ENCODE measurements at regions of chr5 and their contacts with region 1.

Region 1: GRCh38 chr5:75214928-75215327 is 21.8 kb downstream of the ANKRD31 start:
- DNase-seq: peak; percentile 36
- H3K4me3 ChIP-seq: no peak overlapping the region
- H3K27ac ChIP-seq: no peak overlapping the region
- H3K4me1 ChIP-seq: no peaks in the 10 kb centered on the region
- H3K27me3 ChIP-seq: no peaks in the 10 kb centered on the region
- CTCF ChIP-seq: no peak

Region 2: DNA sequence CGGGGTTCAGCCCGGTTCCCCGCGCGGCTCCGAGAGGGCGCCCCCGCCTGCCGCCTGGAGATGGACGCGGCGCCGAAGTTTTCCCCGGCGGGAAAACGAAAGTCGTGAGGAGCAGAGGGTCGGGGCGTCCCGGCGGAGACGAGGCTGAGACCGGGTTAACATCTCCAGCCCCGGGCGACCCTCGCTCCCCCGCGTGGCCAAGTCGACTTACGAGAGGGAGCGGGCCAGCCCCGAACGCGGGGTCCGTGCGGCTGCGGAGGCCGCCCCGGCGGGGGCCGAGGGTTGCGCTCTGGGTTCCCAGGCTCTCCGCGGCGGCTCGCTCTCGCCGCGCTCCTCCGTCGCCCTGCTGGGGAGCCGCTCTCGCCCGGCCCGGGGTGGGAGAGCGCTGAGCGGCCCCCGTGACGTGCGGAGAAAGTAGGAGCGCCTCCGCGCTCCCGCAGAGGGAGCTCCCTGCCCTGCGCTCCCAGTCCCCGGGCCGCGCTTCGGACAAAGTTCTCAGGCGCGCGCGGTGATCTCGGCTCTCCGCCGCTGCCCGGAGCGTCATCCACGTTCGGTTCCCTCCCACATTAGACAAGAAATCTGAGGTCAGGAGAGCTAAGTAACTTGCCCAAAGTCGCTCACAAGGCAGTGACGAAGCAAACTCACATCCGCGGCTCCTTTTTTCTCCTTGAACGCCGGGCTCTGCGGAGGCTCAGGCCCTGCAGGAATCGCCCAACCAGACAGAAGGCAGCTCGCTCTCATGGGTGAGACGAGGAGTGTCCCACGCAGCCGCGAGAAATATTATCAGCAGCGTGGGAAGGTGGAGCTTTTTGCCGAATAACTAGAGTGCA is 161.4 kb before region 1 on chr5:
- intact Hi-C with region 1: loop called (anchors 5 kb)
- DNase-seq: peak; percentile 62
- H3K4me3 ChIP-seq: peak overlapping the region; percentile 82
- H3K27ac ChIP-seq: peak overlapping the region; percentile 81
- H3K4me1 ChIP-seq: peaks cover 8% of the 10 kb centered on the region
- H3K27me3 ChIP-seq: peaks cover 7% of the 10 kb centered on the region
- CTCF ChIP-seq: no peak

Region 3: GRCh38 chr5:75281716-75282465 is 67.0 kb after region 1 on chr5:
- intact Hi-C with region 1: no loop called
- DNase-seq: no peak
- H3K4me3 ChIP-seq: no peak overlapping the region
- H3K27ac ChIP-seq: no peak overlapping the region
- H3K4me1 ChIP-seq: peaks cover 5% of the 10 kb centered on the region
- H3K27me3 ChIP-seq: no peaks in the 10 kb centered on the region
- CTCF ChIP-seq: no peak

Region 4: GRCh38 chr5:75985077-75985476 is 770.1 kb after region 1 on chr5:
- intact Hi-C with region 1: no loop called
- DNase-seq: no peak
- H3K4me3 ChIP-seq: no peak overlapping the region
- H3K27ac ChIP-seq: no peak overlapping the region
- H3K4me1 ChIP-seq: no peaks in the 10 kb centered on the region
- H3K27me3 ChIP-seq: no peaks in the 10 kb centered on the region
- CTCF ChIP-seq: no peak

Measured in colonic mucosa (tissue), 4 donors.